H1 (cell line): ENCODE measurements at regions of chr13 and their contacts with region 1.

Region 1: GRCh38 chr13:111184458-111185401 is 69.6 kb downstream of the ARHGEF7 start:
- DNase-seq: no peak
- H3K4me3 ChIP-seq: no peak overlapping the region
- H3K27ac ChIP-seq: no peak overlapping the region
- H3K4me1 ChIP-seq: peaks cover 0 to 13% (median 4%) of the 10 kb centered on the region in 4 experiments; a peak in 4 of 7 replicates
- H3K27me3 ChIP-seq: no peaks in the 10 kb centered on the region
- CTCF ChIP-seq: no peak
- EP300 ChIP-seq: no peak
- POLR2A ChIP-seq: no peak
- RAD21 ChIP-seq: no peak

Region 2: GRCh38 chr13:111158136-111158805 is 26.5 kb before region 1 on chr13:
- CTCF ChIA-PET with region 1: interaction called, 11 read pairs
- POLR2A ChIA-PET with region 1: no interaction called
- DNase-seq: no peak
- H3K4me3 ChIP-seq: no peak overlapping the region
- H3K27ac ChIP-seq: no peak overlapping the region
- H3K4me1 ChIP-seq: peaks cover 0 to 2% (median 0%) of the 10 kb centered on the region in 4 experiments; a peak in 1 of 7 replicates
- H3K27me3 ChIP-seq: peaks cover 0 to 1% (median 0%) of the 10 kb centered on the region in 4 experiments; a peak in 1 of 7 replicates
- CTCF ChIP-seq: no peak
- EP300 ChIP-seq: no peak
- POLR2A ChIP-seq: no peak
- RAD21 ChIP-seq: no peak